ENCODE measurements at regions of chr11 and their contacts with region 1.

Region 1: GRCh38 chr11:113305440-113306336 is 8.7 kb upstream of the TTC12 start:
- DNase-seq: peak; percentile 61
- CTCF ChIP-seq: peak; percentile 98

Region 2: DNA sequence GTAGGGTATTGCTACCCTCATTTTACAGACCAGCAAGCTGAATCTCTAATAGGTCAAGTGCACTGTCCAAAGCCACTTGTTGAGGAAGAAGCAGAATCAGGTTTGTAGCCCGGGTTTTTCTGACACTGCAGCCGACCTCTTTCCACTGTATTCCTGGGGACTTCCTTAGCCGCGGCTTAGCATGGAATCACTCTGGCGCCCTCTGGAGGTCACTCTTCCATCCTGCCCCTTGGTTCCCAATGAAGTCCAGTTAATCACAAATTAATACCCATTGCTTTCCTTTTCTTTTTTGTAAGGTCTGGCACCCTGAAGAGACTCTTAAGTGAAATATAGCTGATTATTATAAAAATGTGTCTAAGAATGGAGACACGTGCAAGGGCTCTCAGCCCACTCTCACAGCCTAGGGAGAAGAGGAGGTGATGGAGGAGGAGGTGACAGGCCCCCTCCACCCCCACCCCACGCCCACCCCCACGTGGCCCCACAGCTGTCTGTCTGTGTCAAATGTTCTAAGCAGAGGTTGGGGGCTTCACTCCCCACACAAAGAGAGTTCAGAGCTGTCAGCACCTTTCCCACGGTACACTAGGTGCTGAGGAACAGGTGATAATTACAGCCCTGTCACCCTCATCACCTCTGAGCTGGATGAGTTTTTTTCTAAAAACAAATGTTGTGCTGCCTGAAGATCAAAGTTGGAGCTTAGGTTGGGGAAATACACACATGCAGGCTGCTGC is 227.2 kb after region 1 on chr11:
- in situ Hi-C with region 1: loop called (anchors 10 kb)
- DNase-seq: peak; percentile 53
- CTCF ChIP-seq: peak; percentile 76

Region 3: GRCh38 chr11:113721462-113722066 is 415.9 kb after region 1 on chr11:
- in situ Hi-C with region 1: no loop called
- DNase-seq: no peak
- CTCF ChIP-seq: no peak